ENCODE measurements at regions of chr20 and their contacts with region 1.

Region 1: GRCh38 chr20:62893700-62894099 is 32.1 kb upstream of the TCFL5 start:
- DNase-seq: peak in 1 of 2 experiments; percentile 31
- ATAC-seq: peak; percentile 45 to 62; a peak in 4 of 6 replicates
- H3K4me3 ChIP-seq: no peak overlapping the region
- H3K27ac ChIP-seq: no peak overlapping the region
- H3K4me1 ChIP-seq: no peaks in the 10 kb centered on the region
- CTCF ChIP-seq: no peak
- EP300 ChIP-seq: no peak
- POLR2A ChIP-seq: no peak
- RAD21 ChIP-seq: no peak

Region 2: DNA sequence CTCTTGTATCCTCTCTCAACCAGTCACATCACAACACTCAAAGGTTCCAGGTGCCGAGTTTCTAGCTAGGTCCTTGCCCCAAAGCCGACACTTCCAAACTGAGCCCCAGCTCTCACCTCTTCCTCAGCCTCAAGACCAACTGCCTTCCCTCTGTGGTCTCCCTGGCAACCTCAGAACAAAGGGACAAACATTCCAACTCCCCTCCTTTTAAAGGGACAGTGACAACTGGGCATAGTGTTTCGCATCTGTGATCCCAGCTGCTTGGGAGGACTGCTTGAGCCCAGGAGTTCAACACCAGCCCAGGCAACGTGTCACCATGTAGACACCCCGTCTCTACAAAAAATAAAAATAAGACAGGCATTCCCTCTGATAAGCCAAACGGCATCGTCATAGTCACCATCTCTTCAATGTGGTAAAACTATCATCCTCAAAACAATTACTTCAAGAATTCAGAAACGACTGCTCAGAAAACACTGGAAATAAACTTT is 21.3 kb after region 1 on chr20:
- CTCF ChIA-PET with region 1: interaction called, 368 read pairs
- POLR2A ChIA-PET with region 1: no interaction called
- DNase-seq: peak; percentile 41 to 63
- ATAC-seq: peak in 1 of 2 experiments; percentile 79; a peak in 3 of 6 replicates
- H3K4me3 ChIP-seq: no peak overlapping the region
- H3K27ac ChIP-seq: no peak overlapping the region
- H3K4me1 ChIP-seq: peaks cover 39% of the 10 kb centered on the region
- CTCF ChIP-seq: no peak
- EP300 ChIP-seq: no peak
- POLR2A ChIP-seq: no peak
- RAD21 ChIP-seq: no peak